Tibial artery (tissue), 4 donors: ENCODE measurements at regions of chr11 and their contacts with region 1.

Region 1: GRCh38 chr11:59615637-59616395 is at the start of gene OSBP:
- DNase-seq: peak; percentile 100
- H3K4me3 ChIP-seq: peak within 1 kb of the TSS; percentile 82 to 96
- H3K27ac ChIP-seq: peak within 1 kb of the TSS; percentile 95 to 96
- H3K4me1 ChIP-seq: peaks cover 7 to 38% (median 29%) of the 10 kb centered on the region in 4 donors
- H3K27me3 ChIP-seq: no peaks in the 10 kb centered on the region
- CTCF ChIP-seq: peak in 1 of 2 experiments; percentile 13

Region 2: DNA sequence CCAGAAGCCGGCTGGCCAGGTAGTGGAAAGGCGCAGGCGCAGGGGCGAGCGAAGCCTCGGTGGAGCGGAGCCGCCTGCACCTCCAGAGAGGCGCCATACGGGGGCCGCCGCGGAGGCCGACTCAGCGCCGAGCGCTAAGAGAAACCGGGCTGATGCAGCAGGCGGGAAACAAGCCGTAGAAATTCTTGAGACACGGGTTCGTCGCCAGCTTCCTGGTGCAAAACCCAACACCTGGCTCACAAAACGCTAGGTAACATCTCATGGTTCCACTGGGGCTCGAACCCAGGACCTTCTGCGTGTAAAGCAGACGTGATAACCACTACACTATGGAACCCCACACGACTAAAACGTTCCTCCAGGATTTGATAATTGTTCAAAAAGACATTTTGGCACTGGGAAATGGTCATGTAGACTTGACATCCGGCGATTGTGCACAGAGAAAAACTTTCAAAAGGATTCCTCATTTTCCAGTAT is 65.4 kb before region 1 on chr11:
- intact Hi-C with region 1: loop called (anchors 5 kb)
- DNase-seq: peak; percentile 68 to 84
- H3K4me3 ChIP-seq: peak overlapping the region; percentile 57 to 71
- H3K27ac ChIP-seq: peak overlapping the region; percentile 79 to 84
- H3K4me1 ChIP-seq: peaks cover 0 to 8% (median 0%) of the 10 kb centered on the region in 4 donors
- H3K27me3 ChIP-seq: no peaks in the 10 kb centered on the region
- CTCF ChIP-seq: peak; percentile 65 to 72

Region 3: DNA sequence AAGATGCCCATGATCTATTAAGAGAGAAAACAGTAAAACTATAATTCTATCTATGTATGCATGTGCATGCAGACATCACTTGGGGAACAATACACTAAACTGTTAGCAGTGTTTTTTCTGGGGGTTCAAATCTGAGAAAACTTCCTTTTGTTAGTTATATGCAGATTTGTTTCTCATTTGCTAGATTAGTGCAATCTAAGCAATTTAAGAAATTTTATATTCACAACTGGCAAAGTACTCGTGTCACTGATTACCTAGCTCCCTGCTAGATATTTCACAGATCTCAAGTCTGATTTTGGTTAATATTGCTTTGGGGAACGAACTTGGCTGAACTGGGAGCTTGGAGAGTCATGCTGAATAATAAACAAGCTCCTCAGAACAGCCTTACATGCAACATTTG is 14.7 kb after region 1 on chr11:
- intact Hi-C with region 1: loop called (anchors 1 kb)
- DNase-seq: no peak
- H3K4me3 ChIP-seq: no peak overlapping the region
- H3K27ac ChIP-seq: no peak overlapping the region
- H3K4me1 ChIP-seq: peaks cover 0 to 4% (median 0%) of the 10 kb centered on the region in 4 donors
- H3K27me3 ChIP-seq: no peaks in the 10 kb centered on the region
- CTCF ChIP-seq: no peak